Activated CD4-positive, alpha-beta T cell treated with anti-CD3 and anti-CD28 coated beads for 36 hours (primary cell): ENCODE measurements at regions of chr17 and their contacts with region 1.

Region 1: DNA sequence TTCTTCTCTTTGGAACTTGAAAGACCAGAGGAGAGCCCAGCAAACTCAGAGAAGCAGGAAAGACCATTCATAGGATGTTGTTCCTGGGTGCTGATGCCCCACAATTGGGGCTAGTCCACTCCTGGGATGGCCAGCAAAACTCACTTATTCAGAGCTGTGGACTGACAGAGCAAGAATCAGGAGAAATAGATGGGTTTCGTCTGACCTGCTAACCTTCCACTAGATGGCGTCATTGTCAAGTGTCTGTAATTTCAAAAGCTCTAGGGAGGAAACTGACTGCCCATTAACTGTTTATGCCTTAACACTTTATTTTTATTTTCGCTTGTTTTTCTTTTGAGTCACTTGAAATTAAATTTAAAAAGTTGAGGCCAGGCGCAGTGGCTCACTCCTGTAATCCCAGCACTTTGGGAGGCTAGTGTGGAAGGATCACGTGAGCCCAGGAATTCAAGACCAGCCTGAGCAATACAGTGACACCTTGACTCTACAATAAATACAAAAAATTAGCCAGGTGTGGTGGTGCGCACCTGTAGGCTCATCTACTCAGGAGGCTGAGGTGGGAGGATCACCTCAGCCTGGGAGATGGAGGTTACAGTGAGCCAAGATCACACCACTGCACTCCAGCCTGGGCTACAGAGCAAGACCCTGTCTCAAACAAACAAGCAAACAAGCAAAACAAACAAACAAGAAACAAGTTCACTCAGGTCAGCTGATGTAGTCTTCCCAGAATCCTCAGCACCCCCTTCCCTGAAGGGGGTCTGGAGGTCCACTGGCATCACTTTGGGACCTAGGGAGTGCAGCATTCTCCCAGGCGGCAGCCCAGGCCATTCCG is 28.6 kb upstream of the MILR1 start:
- DNase-seq: no peak
- ATAC-seq: peak; percentile 88
- H3K4me3 Mint-ChIP-seq: no peak overlapping the region
- H3K27ac Mint-ChIP-seq: no peak overlapping the region
- H3K4me1 Mint-ChIP-seq: no peaks in the 10 kb centered on the region
- H3K27me3 Mint-ChIP-seq: no peaks in the 10 kb centered on the region

Region 2: GRCh38 chr17:64095144-64095882 is 325.0 kb before region 1 on chr17:
- CTCF ChIA-PET with region 1: no interaction called
- POLR2A ChIA-PET with region 1: no interaction called
- intact Hi-C with region 1: no loop called
- DNase-seq: peak; percentile 39
- ATAC-seq: peak; percentile 31
- H3K4me3 Mint-ChIP-seq: no peak overlapping the region
- H3K27ac Mint-ChIP-seq: peak overlapping the region; percentile 84
- H3K4me1 Mint-ChIP-seq: peaks cover 73% of the 10 kb centered on the region
- H3K27me3 Mint-ChIP-seq: no peaks in the 10 kb centered on the region

Region 3: DNA sequence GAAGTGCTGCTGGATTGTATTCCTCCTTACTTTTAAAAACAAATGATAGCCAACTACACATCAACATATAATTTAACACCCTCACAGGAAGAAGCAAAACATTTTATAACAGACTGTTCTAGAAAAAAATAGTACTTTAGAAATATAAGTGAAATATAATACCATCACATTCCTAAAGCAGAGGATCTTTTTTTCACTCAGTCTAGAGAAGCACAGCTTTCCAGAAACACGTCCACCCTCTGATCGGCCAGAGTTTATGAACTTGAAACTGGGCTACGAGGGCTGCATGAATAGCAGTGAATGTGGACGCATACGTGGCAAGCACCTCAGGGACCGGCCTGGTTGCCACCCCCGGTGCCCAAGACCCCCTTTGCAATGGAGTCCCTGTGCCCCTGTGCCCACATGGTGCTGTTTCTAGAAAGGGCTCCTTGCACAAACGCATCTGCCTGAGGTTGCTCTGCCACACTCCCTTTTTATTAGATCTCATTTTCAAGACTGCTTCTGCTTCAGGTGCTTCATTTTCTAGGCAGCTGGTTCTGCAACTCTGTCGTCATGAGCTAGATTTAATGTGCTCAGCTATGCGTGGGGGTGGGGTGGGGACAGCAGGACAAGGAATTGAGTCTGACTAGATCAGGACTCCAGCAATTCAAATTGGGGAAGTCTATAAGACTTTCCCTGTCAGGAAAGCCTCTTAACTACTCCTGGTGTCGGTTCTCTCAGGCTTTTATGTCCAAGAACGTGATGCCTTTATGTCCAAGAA is 261.3 kb before region 1 on chr17:
- CTCF ChIA-PET with region 1: no interaction called
- POLR2A ChIA-PET with region 1: no interaction called
- intact Hi-C with region 1: no loop called
- DNase-seq: no peak
- ATAC-seq: no peak
- H3K4me3 Mint-ChIP-seq: no peak overlapping the region
- H3K27ac Mint-ChIP-seq: no peak overlapping the region
- H3K4me1 Mint-ChIP-seq: peaks cover 5% of the 10 kb centered on the region
- H3K27me3 Mint-ChIP-seq: no peaks in the 10 kb centered on the region

Region 4: DNA sequence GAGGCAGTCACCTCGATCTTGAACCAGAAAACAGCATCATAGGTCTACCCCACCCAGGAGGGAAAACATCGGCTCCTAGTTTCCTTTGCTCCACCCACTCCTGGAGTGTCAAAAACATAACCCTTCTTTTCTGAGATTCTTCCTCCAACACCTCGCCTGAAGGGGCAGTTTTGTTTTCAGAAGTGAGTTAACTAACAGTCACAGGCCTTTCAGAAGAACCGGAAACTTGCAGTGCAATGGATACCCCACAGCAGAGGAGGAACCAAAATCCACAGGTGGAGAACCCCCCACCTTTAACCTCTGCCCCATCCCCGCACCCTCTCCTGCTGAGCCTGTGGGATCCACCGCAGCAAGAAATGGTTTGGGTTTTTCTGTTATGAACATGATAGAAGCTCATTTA is 149.5 kb before region 1 on chr17:
- CTCF ChIA-PET with region 1: no interaction called
- POLR2A ChIA-PET with region 1: no interaction called
- intact Hi-C with region 1: no loop called
- DNase-seq: no peak
- ATAC-seq: peak; percentile 60
- H3K4me3 Mint-ChIP-seq: no peak overlapping the region
- H3K27ac Mint-ChIP-seq: peak overlapping the region; percentile 43
- H3K4me1 Mint-ChIP-seq: peaks cover 24% of the 10 kb centered on the region
- H3K27me3 Mint-ChIP-seq: no peaks in the 10 kb centered on the region

Region 5: GRCh38 chr17:64320613-64321553 is 99.5 kb before region 1 on chr17:
- CTCF ChIA-PET with region 1: interaction called, 169 read pairs
- POLR2A ChIA-PET with region 1: no interaction called
- intact Hi-C with region 1: loop called (anchors 1 kb)
- DNase-seq: peak; percentile 68
- ATAC-seq: peak; percentile 64
- H3K4me3 Mint-ChIP-seq: no peak overlapping the region
- H3K27ac Mint-ChIP-seq: no peak overlapping the region
- H3K4me1 Mint-ChIP-seq: peaks cover 6% of the 10 kb centered on the region
- H3K27me3 Mint-ChIP-seq: no peaks in the 10 kb centered on the region

Region 6: DNA sequence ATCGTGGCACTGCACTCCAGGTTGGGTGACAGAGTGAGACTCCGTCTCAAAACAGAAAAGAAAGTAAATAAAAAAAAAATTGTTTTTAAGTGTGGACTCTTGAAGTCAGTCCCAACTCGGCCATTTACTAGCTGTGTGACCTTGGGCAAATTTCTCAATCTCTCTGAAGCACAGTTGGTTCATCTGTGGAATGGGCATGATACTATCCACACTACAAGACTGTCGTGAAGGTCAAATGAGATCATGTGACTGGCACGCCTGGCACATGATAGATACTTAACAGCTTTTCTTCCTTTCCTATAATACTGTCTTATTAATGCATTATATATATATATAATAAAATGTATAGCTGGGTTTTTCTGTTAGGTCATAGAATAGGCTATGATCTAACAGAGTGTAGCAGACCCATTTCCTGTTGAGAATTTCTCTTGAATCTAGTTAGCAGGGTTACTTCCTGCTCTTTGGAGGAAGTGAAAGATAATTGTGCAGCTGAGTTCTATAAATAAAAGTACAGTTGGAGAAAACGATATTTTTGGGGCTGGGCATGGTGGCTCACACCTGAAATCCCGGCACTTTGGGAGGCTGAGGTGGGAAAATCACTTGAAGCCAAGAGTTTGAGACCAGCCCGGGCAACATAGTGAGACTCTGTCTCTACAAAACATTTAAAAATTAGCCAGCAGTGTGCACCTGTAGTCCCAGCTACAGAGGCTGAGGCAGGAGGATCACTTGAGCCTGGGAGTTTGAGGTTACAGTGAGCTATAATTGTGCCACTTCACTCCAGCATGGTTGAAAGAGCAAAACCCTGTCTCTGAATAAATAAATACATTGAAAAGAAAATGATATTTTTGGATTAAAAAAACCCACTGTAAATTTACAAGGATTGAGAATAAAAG is 35.9 kb after region 1 on chr17:
- CTCF ChIA-PET with region 1: interaction called, 11 read pairs
- POLR2A ChIA-PET with region 1: no interaction called
- intact Hi-C with region 1: no loop called
- DNase-seq: no peak
- ATAC-seq: no peak
- H3K4me3 Mint-ChIP-seq: no peak overlapping the region
- H3K27ac Mint-ChIP-seq: no peak overlapping the region
- H3K4me1 Mint-ChIP-seq: peaks cover 12% of the 10 kb centered on the region
- H3K27me3 Mint-ChIP-seq: no peaks in the 10 kb centered on the region

Region 7: DNA sequence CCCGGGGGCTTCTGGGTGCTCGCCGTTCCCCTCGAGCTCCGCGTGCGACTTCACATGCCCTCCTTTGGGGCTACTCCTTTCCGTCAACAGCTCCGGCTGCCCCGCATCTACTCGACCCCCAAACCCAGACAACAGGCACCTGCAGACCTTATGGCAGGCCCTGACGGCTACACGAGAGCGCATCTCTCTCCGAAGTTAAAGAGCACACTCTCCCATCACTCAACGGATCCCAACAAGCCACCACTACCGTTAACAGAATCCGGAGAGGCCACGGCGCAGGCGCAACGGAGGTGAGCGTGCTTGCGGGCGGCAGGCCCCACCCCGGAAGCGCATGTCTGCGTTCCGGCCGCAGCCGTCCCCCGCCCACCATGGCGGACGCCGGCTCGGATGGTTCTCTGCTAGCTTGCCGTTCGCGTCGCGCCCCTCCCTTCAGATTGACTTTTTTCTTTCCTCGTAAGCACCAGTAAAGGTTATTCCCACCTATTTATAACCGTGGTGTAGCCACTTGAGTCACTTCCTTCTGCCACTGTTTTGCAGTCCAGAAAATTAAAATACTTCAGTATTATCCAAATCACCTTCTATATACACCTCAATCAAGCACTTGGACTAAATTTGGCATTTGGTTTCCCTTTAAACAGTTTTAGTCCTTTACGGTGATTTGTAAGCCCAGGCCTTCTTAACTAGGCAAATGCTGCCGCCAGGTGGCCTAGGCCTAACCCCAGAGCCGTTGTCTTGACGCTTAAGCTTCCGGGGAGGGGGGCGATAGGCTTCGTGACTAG is 76.6 kb after region 1 on chr17 and contains the start of gene POLG2:
- CTCF ChIA-PET with region 1: interaction called, 145 read pairs
- POLR2A ChIA-PET with region 1: interaction called, 6 read pairs
- intact Hi-C with region 1: no loop called
- DNase-seq: peak; percentile 97
- ATAC-seq: peak; percentile 86
- H3K4me3 Mint-ChIP-seq: peak within 1 kb of the TSS; percentile 98
- H3K27ac Mint-ChIP-seq: peak within 1 kb of the TSS; percentile 98
- H3K4me1 Mint-ChIP-seq: peaks cover 68% of the 10 kb centered on the region
- H3K27me3 Mint-ChIP-seq: no peaks in the 10 kb centered on the region
- total RNA-seq, gene POLG2: 26.9 to 30.2 TPM

Region 8: GRCh38 chr17:64648234-64648633 is 227.9 kb after region 1 on chr17:
- CTCF ChIA-PET with region 1: interaction called, 41 read pairs
- POLR2A ChIA-PET with region 1: no interaction called
- intact Hi-C with region 1: loop called (anchors 1 kb)
- DNase-seq: no peak
- ATAC-seq: no peak
- H3K4me3 Mint-ChIP-seq: no peak overlapping the region
- H3K27ac Mint-ChIP-seq: peak overlapping the region; percentile 89
- H3K4me1 Mint-ChIP-seq: peaks cover 37% of the 10 kb centered on the region
- H3K27me3 Mint-ChIP-seq: no peaks in the 10 kb centered on the region

Region 9: GRCh38 chr17:64736804-64737492 is 316.6 kb after region 1 on chr17:
- CTCF ChIA-PET with region 1: interaction called, 26 read pairs
- POLR2A ChIA-PET with region 1: no interaction called
- intact Hi-C with region 1: loop called (anchors 1 to 2 kb)
- DNase-seq: peak; percentile 73
- ATAC-seq: peak; percentile 91
- H3K4me3 Mint-ChIP-seq: no peak overlapping the region
- H3K27ac Mint-ChIP-seq: no peak overlapping the region
- H3K4me1 Mint-ChIP-seq: peaks cover 9% of the 10 kb centered on the region
- H3K27me3 Mint-ChIP-seq: no peaks in the 10 kb centered on the region